H1 (cell line): ENCODE measurements at regions of chr2 and their contacts with region 1.

Region 1: GRCh38 chr2:27249891-27250651 is 12.8 kb downstream of the SLC30A3 start:
- DNase-seq: peak; percentile 57 to 93
- H3K4me3 ChIP-seq: peak overlapping the region in 2 of 4 experiments; percentile 30 to 52; a peak in 4 of 8 replicates
- H3K27ac ChIP-seq: no peak overlapping the region
- H3K4me1 ChIP-seq: peaks cover 2 to 11% (median 6%) of the 10 kb centered on the region in 4 experiments
- H3K27me3 ChIP-seq: peaks cover 0 to 6% (median 2%) of the 10 kb centered on the region in 4 experiments; a peak in 5 of 7 replicates
- CTCF ChIP-seq: peak; percentile 86 to 98 (median 93)
- EP300 ChIP-seq: no peak
- POLR2A ChIP-seq: peak in 1 of 2 experiments; percentile 47; a peak in 1 of 3 replicates
- RAD21 ChIP-seq: peak; percentile 95 to 96

Region 2: GRCh38 chr2:27185331-27186026 is 64.6 kb before region 1 on chr2:
- CTCF ChIA-PET with region 1: no interaction called
- POLR2A ChIA-PET with region 1: no interaction called
- DNase-seq: no peak
- H3K4me3 ChIP-seq: no peak overlapping the region
- H3K27ac ChIP-seq: no peak overlapping the region
- H3K4me1 ChIP-seq: no peaks in the 10 kb centered on the region
- H3K27me3 ChIP-seq: no peaks in the 10 kb centered on the region
- CTCF ChIP-seq: no peak
- EP300 ChIP-seq: no peak
- POLR2A ChIP-seq: no peak
- RAD21 ChIP-seq: no peak

Region 3: GRCh38 chr2:27211829-27212627 is 38.0 kb before region 1 on chr2 and contains the starts of genes ATRAID and SLC5A6:
- CTCF ChIA-PET with region 1: no interaction called
- POLR2A ChIA-PET with region 1: interaction called, 835 read pairs
- DNase-seq: peak; percentile 59 to 93
- H3K4me3 ChIP-seq: peak within 1 kb of the TSS; percentile 77 to 97 (median 90)
- H3K27ac ChIP-seq: peak within 1 kb of the TSS; percentile 99
- H3K4me1 ChIP-seq: peaks cover 0 to 6% (median 2%) of the 10 kb centered on the region in 4 experiments; a peak in 5 of 7 replicates
- H3K27me3 ChIP-seq: no peaks in the 10 kb centered on the region
- CTCF ChIP-seq: no peak
- EP300 ChIP-seq: no peak
- POLR2A ChIP-seq: peak; percentile 68 to 97
- RAD21 ChIP-seq: no peak
- total RNA-seq, gene ATRAID: 103 and 109 TPM in 2 replicates
- total RNA-seq, gene SLC5A6: 118 and 123 TPM in 2 replicates

Region 4: GRCh38 chr2:27264753-27265535 is 14.9 kb after region 1 on chr2:
- CTCF ChIA-PET with region 1: interaction called, 16 read pairs
- POLR2A ChIA-PET with region 1: interaction called, 71 read pairs
- DNase-seq: peak in 1 of 2 experiments; percentile 89
- H3K4me3 ChIP-seq: peak overlapping the region; percentile 57 to 85 (median 62)
- H3K27ac ChIP-seq: no peak overlapping the region
- H3K4me1 ChIP-seq: peaks cover 3 to 19% (median 14%) of the 10 kb centered on the region in 4 experiments
- H3K27me3 ChIP-seq: peaks cover 39 to 69% (median 60%) of the 10 kb centered on the region in 4 experiments
- CTCF ChIP-seq: peak in 2 of 3 experiments; percentile 76 to 88; a peak in 3 of 4 replicates
- EP300 ChIP-seq: no peak
- POLR2A ChIP-seq: peak in 1 of 2 experiments; percentile 63; a peak in 2 of 3 replicates
- RAD21 ChIP-seq: peak; percentile 42 to 63

Region 5: DNA sequence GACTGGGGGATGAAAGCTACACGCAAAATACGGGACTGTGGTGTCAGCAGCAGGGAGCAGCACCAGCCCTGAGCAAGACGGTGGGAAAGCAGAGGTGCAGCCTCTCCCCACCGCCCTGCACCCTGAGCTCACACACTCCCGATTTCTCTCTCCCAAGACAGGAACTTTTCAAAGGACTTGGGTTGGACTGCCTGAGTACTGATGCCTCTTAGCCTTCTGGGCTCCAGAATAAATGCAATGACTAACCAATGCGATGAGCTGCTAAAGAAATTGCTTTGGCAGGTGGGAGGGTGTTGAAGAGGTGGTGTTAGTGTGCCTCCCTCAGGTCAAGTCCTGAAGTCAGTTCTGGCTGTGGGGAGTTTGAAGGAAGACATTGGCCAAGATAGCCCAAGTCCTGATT is 41.8 kb after region 1 on chr2:
- CTCF ChIA-PET with region 1: interaction called, 116 read pairs
- POLR2A ChIA-PET with region 1: interaction called, 15 read pairs
- DNase-seq: no peak
- H3K4me3 ChIP-seq: no peak overlapping the region
- H3K27ac ChIP-seq: no peak overlapping the region
- H3K4me1 ChIP-seq: peaks cover 0 to 4% (median 2%) of the 10 kb centered on the region in 4 experiments; a peak in 3 of 7 replicates
- H3K27me3 ChIP-seq: no peaks in the 10 kb centered on the region; a peak in 1 of 7 replicates
- CTCF ChIP-seq: peak; percentile 59 to 74 (median 70)
- EP300 ChIP-seq: no peak
- POLR2A ChIP-seq: no peak
- RAD21 ChIP-seq: peak; percentile 80 to 87

Region 6: GRCh38 chr2:27313882-27314645 is 64.0 kb after region 1 on chr2:
- CTCF ChIA-PET with region 1: interaction called, 5 read pairs
- POLR2A ChIA-PET with region 1: interaction called, 46 read pairs
- DNase-seq: no peak
- H3K4me3 ChIP-seq: no peak overlapping the region
- H3K27ac ChIP-seq: no peak overlapping the region
- H3K4me1 ChIP-seq: peaks cover 0 to 2% (median 0%) of the 10 kb centered on the region in 4 experiments; a peak in 1 of 7 replicates
- H3K27me3 ChIP-seq: no peaks in the 10 kb centered on the region; a peak in 3 of 7 replicates
- CTCF ChIP-seq: no peak
- EP300 ChIP-seq: no peak
- POLR2A ChIP-seq: no peak
- RAD21 ChIP-seq: no peak

Region 7: GRCh38 chr2:27545348-27546141 is 295.5 kb after region 1 on chr2:
- CTCF ChIA-PET with region 1: no interaction called
- POLR2A ChIA-PET with region 1: no interaction called
- DNase-seq: no peak
- H3K4me3 ChIP-seq: no peak overlapping the region
- H3K27ac ChIP-seq: no peak overlapping the region
- H3K4me1 ChIP-seq: no peaks in the 10 kb centered on the region
- H3K27me3 ChIP-seq: no peaks in the 10 kb centered on the region
- CTCF ChIP-seq: no peak
- EP300 ChIP-seq: no peak
- POLR2A ChIP-seq: no peak
- RAD21 ChIP-seq: no peak